ENCODE measurements at regions of chr17 and their contacts with region 1.

Region 1: GRCh38 chr17:47368262-47368661 is 44.5 kb downstream of the EFCAB13 start:
- DNase-seq: peak; percentile 96
- ATAC-seq: peak; percentile 89
- H3K4me3 ChIP-seq: peak overlapping the region; percentile 5; the same call in 1 of the 2 replicates
- H3K27ac ChIP-seq: peak overlapping the region; percentile 31
- H3K4me1 ChIP-seq: peaks cover 19% of the 10 kb centered on the region
- H3K27me3 ChIP-seq: no peaks in the 10 kb centered on the region
- CTCF ChIP-seq: no peak

Region 2: DNA sequence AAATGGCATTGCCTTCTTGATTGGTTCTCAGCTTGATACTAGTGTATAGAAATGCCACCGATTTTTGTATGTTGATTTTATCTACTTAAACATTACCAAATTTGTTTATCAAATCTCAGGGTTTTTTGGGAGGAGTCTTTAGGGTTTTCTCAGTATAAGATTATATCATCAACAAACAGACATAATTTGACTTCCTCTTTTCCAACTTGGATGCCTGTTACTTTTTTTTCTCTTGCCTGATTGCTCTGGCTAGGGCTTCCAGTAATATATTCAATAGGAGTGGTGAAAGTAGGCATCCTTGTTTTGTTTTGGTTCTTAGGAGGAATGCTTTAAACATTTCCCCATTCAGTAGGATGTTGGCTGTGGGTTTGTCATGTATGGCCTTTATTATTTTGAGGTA is 15.4 kb before region 1 on chr17:
- CTCF ChIA-PET with region 1: no interaction called
- POLR2A ChIA-PET with region 1: no interaction called
- intact Hi-C with region 1: loop called (anchors 2 kb)
- DNase-seq: no peak
- ATAC-seq: no peak
- H3K4me3 ChIP-seq: no peak overlapping the region
- H3K27ac ChIP-seq: no peak overlapping the region
- H3K4me1 ChIP-seq: peaks cover 4% of the 10 kb centered on the region; the same call in 1 of the 2 replicates
- H3K27me3 ChIP-seq: no peaks in the 10 kb centered on the region
- CTCF ChIP-seq: no peak

Region 3: GRCh38 chr17:47400333-47400732 is 32.1 kb after region 1 on chr17:
- CTCF ChIA-PET with region 1: no interaction called
- POLR2A ChIA-PET with region 1: no interaction called
- intact Hi-C with region 1: no loop called
- DNase-seq: no peak
- ATAC-seq: no peak
- H3K4me3 ChIP-seq: no peak overlapping the region
- H3K27ac ChIP-seq: no peak overlapping the region
- H3K4me1 ChIP-seq: no peaks in the 10 kb centered on the region
- H3K27me3 ChIP-seq: no peaks in the 10 kb centered on the region
- CTCF ChIP-seq: no peak